GM12878 (cell line): ENCODE measurements at regions of chr21 and their contacts with region 1.

Region 1: GRCh38 chr21:15729674-15730483 is at the start of gene USP25:
- DNase-seq: peak; percentile 19
- ATAC-seq: peak; percentile 84
- H3K4me3 ChIP-seq: peak within 1 kb of the TSS; percentile 89
- H3K27ac ChIP-seq: peak within 1 kb of the TSS; percentile 62
- H3K4me1 ChIP-seq: peaks cover 6% of the 10 kb centered on the region; the same call in 1 of the 2 replicates
- H3K27me3 ChIP-seq: peaks cover 0 to 2% of the 10 kb centered on the region in 2 experiments; a peak in 1 of 4 replicates
- CTCF ChIP-seq: no peak; a peak in 1 of 6 replicates
- EP300 ChIP-seq: no peak
- POLR2A ChIP-seq: peak; percentile 85
- RAD21 ChIP-seq: 0 out of 2 replicates have a peak, but pooled peaks have one; percentile 15
- polyA plus RNA-seq, gene USP25: 6.2 to 7.4 TPM

Region 2: GRCh38 chr21:14086553-14086952 is 1643.3 kb before region 1 on chr21:
- CTCF ChIA-PET with region 1: no interaction called
- POLR2A ChIA-PET with region 1: no interaction called
- RAD21 ChIA-PET with region 1: no interaction called
- SMC1A ChIA-PET with region 1: no interaction called
- in situ Hi-C with region 1: loop called (anchors 25 kb)
- intact Hi-C with region 1: no loop called
- DNase-seq: peak; percentile 70
- ATAC-seq: peak; percentile 83
- H3K4me3 ChIP-seq: no peak overlapping the region
- H3K27ac ChIP-seq: peak overlapping the region; percentile 71
- H3K4me1 ChIP-seq: peaks cover 6% of the 10 kb centered on the region
- H3K27me3 ChIP-seq: no peaks in the 10 kb centered on the region
- CTCF ChIP-seq: no peak
- EP300 ChIP-seq: peak in 1 of 2 experiments; percentile 57; a peak in 1 of 4 replicates
- POLR2A ChIP-seq: no peak
- RAD21 ChIP-seq: no peak

Region 3: GRCh38 chr21:14382835-14383594 is 1346.9 kb before region 1 on chr21 and contains the start of gene HSPA13:
- CTCF ChIA-PET with region 1: no interaction called
- POLR2A ChIA-PET with region 1: no interaction called
- RAD21 ChIA-PET with region 1: no interaction called
- SMC1A ChIA-PET with region 1: no interaction called
- in situ Hi-C with region 1: loop called (anchors 5 kb)
- intact Hi-C with region 1: no loop called
- DNase-seq: peak; percentile 99
- ATAC-seq: peak; percentile 97
- H3K4me3 ChIP-seq: peak within 1 kb of the TSS; percentile 95
- H3K27ac ChIP-seq: peak within 1 kb of the TSS; percentile 91
- H3K4me1 ChIP-seq: 0 out of 2 replicates have a peak, but pooled peaks cover 6% of the 10 kb centered on the region
- H3K27me3 ChIP-seq: no peaks in the 10 kb centered on the region
- CTCF ChIP-seq: 0 out of 6 replicates have a peak, but pooled peaks of 1 of the 3 experiments have one; percentile 7
- EP300 ChIP-seq: no peak
- POLR2A ChIP-seq: peak; percentile 84
- RAD21 ChIP-seq: no peak
- polyA plus RNA-seq, gene HSPA13: 10.0 to 17.7 TPM

Region 4: DNA sequence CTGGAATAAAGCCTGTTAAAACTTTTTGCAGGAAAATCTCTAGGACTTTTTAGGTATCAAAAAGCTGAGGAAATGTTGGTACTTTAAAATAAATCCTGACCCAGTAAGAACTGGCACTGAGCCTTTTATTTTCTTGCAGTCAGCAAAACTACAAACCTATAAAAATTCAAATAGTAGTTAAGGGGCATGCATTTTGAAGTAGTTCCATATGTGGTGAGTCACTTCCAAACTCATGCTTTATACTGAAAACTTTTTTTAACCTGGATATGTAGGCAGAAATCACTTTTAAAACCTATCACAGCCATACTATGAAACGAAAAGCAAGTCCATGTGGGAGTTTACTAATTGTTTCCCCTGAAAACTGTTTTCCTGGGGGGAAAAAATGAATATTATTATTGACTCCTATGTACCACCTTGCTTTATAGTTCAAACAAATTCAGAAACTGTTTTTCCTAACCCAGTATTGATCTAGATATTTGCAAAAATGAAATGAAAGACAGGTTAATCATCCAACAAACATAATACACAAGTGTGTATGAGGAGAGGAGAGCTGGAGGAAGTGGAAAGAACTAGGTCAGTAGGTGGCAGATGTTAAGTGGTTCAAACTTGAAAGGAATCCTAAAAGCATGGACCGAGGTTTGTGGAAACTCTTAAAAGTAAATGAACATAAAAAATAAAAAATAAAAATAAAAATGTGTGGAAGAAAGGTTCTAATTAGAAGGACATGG is 695.6 kb before region 1 on chr21:
- CTCF ChIA-PET with region 1: no interaction called
- POLR2A ChIA-PET with region 1: no interaction called
- RAD21 ChIA-PET with region 1: no interaction called
- SMC1A ChIA-PET with region 1: no interaction called
- in situ Hi-C with region 1: loop called (anchors 25 kb)
- intact Hi-C with region 1: no loop called
- DNase-seq: no peak
- ATAC-seq: no peak
- H3K4me3 ChIP-seq: no peak overlapping the region
- H3K27ac ChIP-seq: no peak overlapping the region
- H3K4me1 ChIP-seq: no peaks in the 10 kb centered on the region
- H3K27me3 ChIP-seq: no peaks in the 10 kb centered on the region
- CTCF ChIP-seq: no peak
- EP300 ChIP-seq: no peak
- POLR2A ChIP-seq: no peak
- RAD21 ChIP-seq: no peak

Region 5: DNA sequence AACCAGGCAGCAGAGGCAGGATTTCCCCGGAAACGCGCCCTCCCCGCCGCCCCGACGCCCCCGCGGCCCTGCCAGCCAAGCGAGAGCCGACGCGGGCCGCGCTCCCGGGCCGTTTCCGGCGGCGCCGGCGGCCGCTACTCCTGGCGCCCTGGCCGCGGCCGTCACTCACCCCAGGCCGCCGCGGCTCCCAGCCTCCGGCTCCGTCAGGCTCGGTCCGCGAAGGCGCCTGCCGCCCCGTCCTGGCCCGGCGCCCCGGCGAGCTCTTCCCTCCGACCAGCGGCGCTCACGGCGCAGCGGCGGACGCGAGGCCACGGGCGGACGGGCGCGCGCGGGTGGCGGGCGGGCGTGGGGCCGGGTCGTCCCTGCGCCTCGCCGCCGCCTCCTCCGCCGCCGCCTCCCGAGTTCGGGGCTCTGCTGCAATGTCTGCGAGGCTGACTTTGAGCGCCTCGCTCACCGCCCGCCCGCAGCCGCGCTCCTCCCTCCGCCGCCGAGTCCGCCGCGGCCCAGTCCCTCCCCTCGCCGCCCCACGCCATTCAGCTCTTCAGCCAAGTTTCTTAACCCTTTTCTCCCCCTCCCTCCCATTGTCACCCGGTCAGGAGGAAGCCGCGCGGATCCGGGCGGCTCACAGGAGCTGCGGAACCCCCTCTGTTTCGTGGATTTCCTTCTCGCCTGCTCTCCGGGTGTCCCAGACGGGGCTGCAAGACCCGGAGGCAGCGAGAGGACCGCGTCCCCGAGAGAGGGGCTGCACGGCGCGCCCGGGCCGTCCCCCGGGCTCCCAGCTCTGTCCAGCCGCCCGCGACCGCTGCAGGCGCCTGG is 665.1 kb before region 1 on chr21 and contains the start of gene NRIP1:
- CTCF ChIA-PET with region 1: no interaction called
- POLR2A ChIA-PET with region 1: no interaction called
- RAD21 ChIA-PET with region 1: no interaction called
- SMC1A ChIA-PET with region 1: no interaction called
- in situ Hi-C with region 1: no loop called
- intact Hi-C with region 1: loop called (anchors 10 kb)
- DNase-seq: no peak
- ATAC-seq: peak; percentile 84
- H3K4me3 ChIP-seq: peak within 1 kb of the TSS; percentile 91
- H3K27ac ChIP-seq: peak within 1 kb of the TSS; percentile 63
- H3K4me1 ChIP-seq: no peaks in the 10 kb centered on the region
- H3K27me3 ChIP-seq: peaks cover 0 to 5% of the 10 kb centered on the region in 2 experiments; a peak in 1 of 4 replicates
- CTCF ChIP-seq: no peak
- EP300 ChIP-seq: no peak
- POLR2A ChIP-seq: peak; percentile 80
- RAD21 ChIP-seq: no peak
- polyA plus RNA-seq, gene NRIP1: 2.9 to 4.0 TPM

Region 6: GRCh38 chr21:15604424-15604823 is 125.5 kb before region 1 on chr21:
- CTCF ChIA-PET with region 1: no interaction called
- POLR2A ChIA-PET with region 1: no interaction called
- RAD21 ChIA-PET with region 1: no interaction called
- SMC1A ChIA-PET with region 1: no interaction called
- in situ Hi-C with region 1: no loop called
- intact Hi-C with region 1: no loop called
- DNase-seq: no peak
- ATAC-seq: no peak
- H3K4me3 ChIP-seq: no peak overlapping the region
- H3K27ac ChIP-seq: no peak overlapping the region
- H3K4me1 ChIP-seq: no peaks in the 10 kb centered on the region
- H3K27me3 ChIP-seq: no peaks in the 10 kb centered on the region
- CTCF ChIP-seq: no peak
- EP300 ChIP-seq: no peak
- POLR2A ChIP-seq: no peak
- RAD21 ChIP-seq: no peak

Region 7: GRCh38 chr21:15826147-15826780 is 96.4 kb after region 1 on chr21:
- CTCF ChIA-PET with region 1: interaction called, 10 read pairs
- POLR2A ChIA-PET with region 1: no interaction called
- RAD21 ChIA-PET with region 1: interaction called, 3 read pairs
- SMC1A ChIA-PET with region 1: interaction called, 5 read pairs
- in situ Hi-C with region 1: no loop called
- intact Hi-C with region 1: loop called (anchors 5 kb)
- DNase-seq: peak; percentile 11
- ATAC-seq: peak; percentile 84
- H3K4me3 ChIP-seq: no peak overlapping the region
- H3K27ac ChIP-seq: no peak overlapping the region
- H3K4me1 ChIP-seq: no peaks in the 10 kb centered on the region
- H3K27me3 ChIP-seq: no peaks in the 10 kb centered on the region
- CTCF ChIP-seq: peak; percentile 50 to 79 (median 60); a peak in 5 of 6 replicates
- EP300 ChIP-seq: no peak
- POLR2A ChIP-seq: no peak
- RAD21 ChIP-seq: peak; percentile 75

Region 8: GRCh38 chr21:17611414-17612022 is 1881.6 kb after region 1 on chr21:
- CTCF ChIA-PET with region 1: no interaction called
- POLR2A ChIA-PET with region 1: no interaction called
- RAD21 ChIA-PET with region 1: no interaction called
- SMC1A ChIA-PET with region 1: no interaction called
- in situ Hi-C with region 1: loop called (anchors 25 kb)
- intact Hi-C with region 1: no loop called
- DNase-seq: peak; percentile 59
- ATAC-seq: peak; percentile 68
- H3K4me3 ChIP-seq: peak overlapping the region; percentile 100
- H3K27ac ChIP-seq: peak overlapping the region; percentile 70
- H3K4me1 ChIP-seq: peaks cover 4% of the 10 kb centered on the region
- H3K27me3 ChIP-seq: no peaks in the 10 kb centered on the region
- CTCF ChIP-seq: no peak
- EP300 ChIP-seq: 0 out of 4 replicates have a peak, but pooled peaks have one; percentile 13 to 20
- POLR2A ChIP-seq: 0 out of 2 replicates have a peak, but pooled peaks have one; percentile 48
- RAD21 ChIP-seq: no peak